A549 (cell line): ENCODE measurements at regions of chr5 and their contacts with region 1.

Region 1: DNA sequence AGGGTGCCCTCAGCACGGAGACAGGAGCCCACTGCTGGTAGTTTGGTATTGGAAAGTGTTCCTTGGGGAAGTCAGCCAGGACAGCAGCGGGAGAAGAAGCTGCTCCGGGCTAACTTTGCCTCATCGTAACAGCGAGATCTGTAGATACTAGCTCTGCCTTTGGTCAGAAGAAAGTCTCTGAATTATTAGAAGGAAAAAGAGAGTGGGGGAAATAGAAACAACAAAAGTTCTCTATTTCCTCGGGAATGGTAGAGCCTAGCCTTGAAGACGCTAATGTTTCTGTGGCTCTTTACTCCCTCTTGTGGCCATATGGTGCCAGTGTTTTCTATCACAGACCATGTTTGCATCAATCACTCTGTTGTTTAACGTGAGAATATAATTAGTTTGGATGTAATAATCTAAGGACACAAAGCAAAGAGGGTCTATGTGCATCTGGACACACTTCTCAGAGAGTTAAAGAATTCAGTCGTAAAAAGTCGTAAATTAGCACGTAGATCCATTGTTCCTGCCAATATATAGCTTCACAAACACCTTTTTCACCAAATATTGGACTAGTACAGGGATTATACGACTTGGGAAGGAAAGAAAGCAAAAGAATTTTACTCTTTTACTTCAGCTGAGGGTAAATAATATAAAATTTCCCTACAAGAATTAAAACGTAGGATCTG is 40.2 kb upstream of the HSD17B4 start:
- DNase-seq: peak; percentile 67 to 78
- ATAC-seq: peak; percentile 97 to 98
- H3K4me3 ChIP-seq: peak overlapping the region; percentile 49
- H3K27ac ChIP-seq: peak overlapping the region; percentile 73 to 85
- H3K4me1 ChIP-seq: peaks cover 14% of the 10 kb centered on the region; the same call in 2 of the 3 replicates
- CTCF ChIP-seq: peak; percentile 99
- EP300 ChIP-seq: no peak
- POLR2A ChIP-seq: no peak
- RAD21 ChIP-seq: peak; percentile 94 to 97

Region 2: GRCh38 chr5:119009131-119009530 is 402.9 kb before region 1 on chr5:
- CTCF ChIA-PET with region 1: interaction called, 40 read pairs
- POLR2A ChIA-PET with region 1: no interaction called
- DNase-seq: peak; percentile 13 to 41
- ATAC-seq: peak in 1 of 2 experiments; percentile 68; a peak in 2 of 6 replicates
- H3K4me3 ChIP-seq: no peak overlapping the region
- H3K27ac ChIP-seq: no peak overlapping the region
- H3K4me1 ChIP-seq: peaks cover 11% of the 10 kb centered on the region; the same call in 1 of the 3 replicates
- CTCF ChIP-seq: no peak
- EP300 ChIP-seq: no peak
- POLR2A ChIP-seq: no peak
- RAD21 ChIP-seq: no peak

Region 3: DNA sequence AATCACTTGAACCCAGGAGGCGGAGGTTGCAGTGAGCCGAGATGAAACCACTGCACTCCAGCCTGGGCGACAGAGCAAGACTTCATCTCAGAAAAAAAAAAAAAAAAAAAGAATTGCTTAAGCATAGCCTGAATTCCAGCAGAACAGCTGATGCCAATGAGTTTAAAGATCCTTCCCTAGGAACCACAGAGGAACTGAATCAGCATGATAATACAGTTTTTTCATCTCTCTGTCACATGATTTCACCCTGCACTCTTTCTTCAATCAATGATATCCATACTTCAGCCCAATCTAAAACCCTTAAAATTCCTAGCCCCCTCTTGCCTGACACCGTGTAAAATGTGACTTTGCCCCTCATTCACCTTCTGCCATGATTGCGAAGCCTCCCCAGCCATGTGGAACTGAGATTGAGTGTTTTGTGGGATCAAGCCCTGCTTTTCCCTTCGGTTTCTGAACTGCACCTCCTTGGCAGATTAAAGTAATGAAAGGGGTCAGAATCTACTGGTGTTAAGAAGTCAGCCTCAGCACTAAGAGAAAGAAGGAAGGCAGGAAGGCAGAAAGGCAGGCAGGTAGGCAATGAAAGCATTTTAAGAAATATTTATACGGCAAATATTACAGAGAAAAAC is 362.1 kb before region 1 on chr5:
- CTCF ChIA-PET with region 1: interaction called, 11 read pairs
- POLR2A ChIA-PET with region 1: no interaction called
- DNase-seq: peak in 1 of 2 experiments; percentile 29
- ATAC-seq: no peak; a peak in 2 of 6 replicates
- H3K4me3 ChIP-seq: no peak overlapping the region
- H3K27ac ChIP-seq: no peak overlapping the region
- H3K4me1 ChIP-seq: peaks cover 5% of the 10 kb centered on the region; the same call in 2 of the 3 replicates
- CTCF ChIP-seq: no peak
- EP300 ChIP-seq: no peak
- POLR2A ChIP-seq: no peak
- RAD21 ChIP-seq: no peak

Region 4: DNA sequence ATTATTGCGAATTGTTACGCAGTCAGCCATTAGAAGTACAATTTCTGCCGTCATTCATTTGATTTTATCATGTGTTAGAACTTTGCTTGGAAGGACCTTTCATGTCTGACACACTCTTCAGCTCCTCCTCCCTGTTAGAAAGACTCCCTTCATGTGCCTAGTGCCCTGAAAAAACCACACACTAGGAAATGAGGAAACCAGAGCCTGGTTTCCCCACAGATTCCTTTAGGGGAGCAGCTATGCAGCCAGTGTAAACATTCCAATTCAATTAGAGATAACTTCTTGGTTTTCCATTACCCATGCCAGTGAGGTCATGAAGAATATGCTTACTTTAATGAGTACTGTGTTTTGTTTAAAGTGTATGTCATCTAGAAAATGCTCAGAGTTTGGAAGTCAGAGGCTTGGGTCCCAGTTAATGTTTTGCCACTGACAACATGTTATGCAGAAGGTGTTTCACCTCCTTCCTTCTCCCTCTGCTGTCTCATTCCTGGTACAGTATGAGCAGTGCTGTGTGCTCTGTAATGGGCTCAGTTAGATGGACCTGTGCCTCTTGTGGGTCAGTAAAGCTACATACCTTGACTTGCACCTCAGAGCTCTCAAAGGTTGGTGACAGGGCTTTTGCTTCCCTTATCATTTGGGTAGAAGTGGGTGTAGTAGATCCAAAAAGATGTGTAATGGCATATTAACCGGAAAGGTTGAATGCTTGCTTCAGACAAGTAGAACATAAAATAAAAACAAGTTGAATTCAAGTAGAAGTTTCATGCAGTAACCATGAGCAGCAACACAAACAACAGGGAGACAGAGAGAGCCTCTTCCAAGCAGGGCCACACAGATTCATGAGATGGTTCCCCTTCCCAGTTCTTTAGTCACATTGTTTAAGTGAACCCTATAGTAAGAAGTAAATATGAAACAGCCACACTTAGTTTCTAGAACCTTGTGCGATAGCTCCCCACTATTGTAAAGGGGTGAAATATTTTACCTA is 108.9 kb before region 1 on chr5:
- CTCF ChIA-PET with region 1: interaction called, 10 read pairs
- POLR2A ChIA-PET with region 1: no interaction called
- DNase-seq: peak; percentile 65 to 93
- ATAC-seq: peak; percentile 94 to 96
- H3K4me3 ChIP-seq: peak overlapping the region; percentile 14
- H3K27ac ChIP-seq: peak overlapping the region; percentile 82 to 89
- H3K4me1 ChIP-seq: peaks cover 78% of the 10 kb centered on the region
- CTCF ChIP-seq: no peak
- EP300 ChIP-seq: peak; percentile 79 to 90; a peak in 4 of 5 replicates
- POLR2A ChIP-seq: no peak
- RAD21 ChIP-seq: peak; percentile 40 to 50

Region 5: GRCh38 chr5:119332978-119333401 is 79.1 kb before region 1 on chr5:
- CTCF ChIA-PET with region 1: interaction called, 44 read pairs
- POLR2A ChIA-PET with region 1: no interaction called
- DNase-seq: no peak
- ATAC-seq: no peak
- H3K4me3 ChIP-seq: no peak overlapping the region
- H3K27ac ChIP-seq: peak overlapping the region in 1 of 2 experiments; percentile 18; a peak in 1 of 6 replicates
- H3K4me1 ChIP-seq: peaks cover 45% of the 10 kb centered on the region
- CTCF ChIP-seq: no peak
- EP300 ChIP-seq: no peak
- POLR2A ChIP-seq: no peak
- RAD21 ChIP-seq: no peak

Region 6: GRCh38 chr5:119378075-119378700 is 33.9 kb before region 1 on chr5:
- CTCF ChIA-PET with region 1: interaction called, 10 read pairs
- POLR2A ChIA-PET with region 1: no interaction called
- DNase-seq: no peak
- ATAC-seq: no peak
- H3K4me3 ChIP-seq: no peak overlapping the region
- H3K27ac ChIP-seq: no peak overlapping the region
- H3K4me1 ChIP-seq: no peaks in the 10 kb centered on the region
- CTCF ChIP-seq: no peak
- EP300 ChIP-seq: no peak
- POLR2A ChIP-seq: no peak
- RAD21 ChIP-seq: no peak